PC-9 (cell line): ENCODE measurements at regions of chr5 and their contacts with region 1.

Region 1: DNA sequence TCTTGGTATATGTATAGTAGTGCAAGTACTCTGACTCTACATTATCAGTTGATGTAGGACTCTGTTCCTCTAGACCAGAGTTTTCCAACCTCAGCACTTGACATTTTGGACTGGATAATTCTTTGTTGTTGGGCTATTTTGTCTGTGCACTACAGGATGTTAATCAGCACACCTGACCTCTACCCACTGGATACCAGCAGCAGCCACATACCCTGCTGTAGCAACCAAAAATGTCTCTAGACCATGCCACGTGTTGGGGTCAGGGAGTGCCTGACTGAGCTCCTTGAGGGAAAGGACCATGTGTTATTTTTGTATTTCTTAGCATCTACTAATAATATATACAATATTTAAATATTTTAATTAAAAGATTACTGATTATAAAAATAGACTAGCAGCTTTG is 42.7 kb downstream of the TNPO1 start:
- DNase-seq: no peak
- H3K4me3 ChIP-seq: no peak overlapping the region
- H3K27ac ChIP-seq: no peak overlapping the region
- H3K4me1 ChIP-seq: peaks cover 6% of the 10 kb centered on the region; the same call in 1 of the 2 replicates
- H3K27me3 ChIP-seq: no peaks in the 10 kb centered on the region
- CTCF ChIP-seq: no peak

Region 2: DNA sequence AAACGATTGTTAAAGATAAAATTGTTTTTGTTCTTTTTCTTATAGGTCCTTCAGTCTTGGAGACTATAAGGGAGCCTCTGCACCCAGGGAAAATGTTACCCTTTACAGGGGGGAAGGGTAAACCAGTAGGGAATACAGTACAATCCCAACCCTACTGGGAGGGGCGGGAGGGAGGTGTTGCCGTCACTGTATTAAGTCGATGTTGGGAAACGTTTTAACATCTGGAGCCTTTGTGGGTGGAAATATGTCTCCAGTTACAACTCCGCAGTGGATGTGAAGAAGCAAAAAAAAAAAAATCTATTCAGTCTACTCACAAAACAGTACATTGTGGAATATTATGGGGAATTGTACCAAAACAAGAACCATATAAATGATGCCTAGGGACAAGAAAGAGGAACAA is 49.5 kb after region 1 on chr5:
- CTCF ChIA-PET with region 1: no interaction called
- POLR2A ChIA-PET with region 1: no interaction called
- intact Hi-C with region 1: loop called (anchors 5 kb)
- DNase-seq: no peak
- H3K4me3 ChIP-seq: no peak overlapping the region
- H3K27ac ChIP-seq: no peak overlapping the region
- H3K4me1 ChIP-seq: no peaks in the 10 kb centered on the region
- H3K27me3 ChIP-seq: no peaks in the 10 kb centered on the region
- CTCF ChIP-seq: no peak

Region 3: GRCh38 chr5:73170522-73170921 is 311.4 kb after region 1 on chr5:
- CTCF ChIA-PET with region 1: no interaction called
- POLR2A ChIA-PET with region 1: no interaction called
- intact Hi-C with region 1: no loop called
- DNase-seq: no peak
- H3K4me3 ChIP-seq: no peak overlapping the region
- H3K27ac ChIP-seq: no peak overlapping the region
- H3K4me1 ChIP-seq: peaks cover 6% of the 10 kb centered on the region; the same call in 1 of the 2 replicates
- H3K27me3 ChIP-seq: no peaks in the 10 kb centered on the region
- CTCF ChIP-seq: peak; percentile 51; the same call in 1 of the 2 replicates